Activated CD4-positive, alpha-beta T cell treated with anti-CD3 and anti-CD28 coated beads for 36 hours (primary cell): ENCODE measurements at regions of chr1 and their contacts with region 1.

Region 1: DNA sequence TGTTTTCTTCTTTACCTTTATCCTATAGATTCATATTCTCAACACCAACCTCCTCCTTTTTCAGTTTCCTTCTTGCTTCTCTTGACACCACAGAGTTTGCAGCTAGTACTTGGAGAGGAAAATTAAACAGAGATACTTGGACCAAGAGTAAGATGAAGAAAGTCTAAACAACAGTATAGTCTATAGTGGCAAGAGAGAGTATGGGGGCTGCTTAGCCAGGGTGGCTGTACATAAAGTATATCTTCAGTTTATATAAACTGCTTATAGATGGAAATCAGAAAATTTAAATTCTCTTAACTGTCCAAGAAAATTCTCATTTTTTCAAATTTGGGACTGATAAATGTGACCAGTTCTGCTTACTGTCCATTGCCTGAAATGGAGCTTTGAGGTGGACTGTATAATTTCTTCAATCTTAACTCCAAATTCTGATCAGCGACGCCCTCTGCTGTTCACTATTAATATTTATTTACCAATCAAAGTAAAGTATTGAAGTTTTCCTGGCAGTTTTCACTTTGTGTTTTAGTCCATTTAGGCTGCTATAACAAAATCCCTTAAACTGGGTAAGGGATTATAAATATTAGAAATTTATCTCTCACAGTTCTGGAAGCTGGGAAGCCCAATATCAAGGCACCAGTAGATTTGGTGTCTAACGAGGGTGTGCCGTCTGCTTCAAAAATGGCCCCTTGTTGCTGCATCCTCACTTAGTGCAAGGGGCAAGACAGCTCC is 14.8 kb upstream of the METTL18 start:
- DNase-seq: peak; percentile 24
- ATAC-seq: no peak
- H3K4me3 Mint-ChIP-seq: no peak overlapping the region
- H3K27ac Mint-ChIP-seq: no peak overlapping the region
- H3K4me1 Mint-ChIP-seq: no peaks in the 10 kb centered on the region
- H3K27me3 Mint-ChIP-seq: no peaks in the 10 kb centered on the region

Region 2: DNA sequence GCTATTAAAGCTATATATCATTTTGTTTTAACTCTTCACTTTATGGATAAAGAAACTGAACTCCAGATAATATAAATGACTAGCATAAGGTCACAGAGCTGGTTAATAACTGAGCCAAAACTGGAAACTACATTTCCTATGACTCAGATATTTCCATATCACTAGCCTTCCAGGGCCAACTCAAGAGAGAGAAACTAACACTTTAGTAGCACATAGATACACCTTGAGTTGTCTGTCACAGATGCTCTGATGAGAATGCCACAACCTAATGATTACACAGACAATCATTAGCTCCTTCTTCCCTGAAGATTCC is 482.6 kb before region 1 on chr1:
- CTCF ChIA-PET with region 1: no interaction called
- POLR2A ChIA-PET with region 1: no interaction called
- intact Hi-C with region 1: no loop called
- DNase-seq: no peak
- ATAC-seq: peak; percentile 96
- H3K4me3 Mint-ChIP-seq: no peak overlapping the region
- H3K27ac Mint-ChIP-seq: no peak overlapping the region
- H3K4me1 Mint-ChIP-seq: peaks cover 19% of the 10 kb centered on the region
- H3K27me3 Mint-ChIP-seq: no peaks in the 10 kb centered on the region

Region 3: DNA sequence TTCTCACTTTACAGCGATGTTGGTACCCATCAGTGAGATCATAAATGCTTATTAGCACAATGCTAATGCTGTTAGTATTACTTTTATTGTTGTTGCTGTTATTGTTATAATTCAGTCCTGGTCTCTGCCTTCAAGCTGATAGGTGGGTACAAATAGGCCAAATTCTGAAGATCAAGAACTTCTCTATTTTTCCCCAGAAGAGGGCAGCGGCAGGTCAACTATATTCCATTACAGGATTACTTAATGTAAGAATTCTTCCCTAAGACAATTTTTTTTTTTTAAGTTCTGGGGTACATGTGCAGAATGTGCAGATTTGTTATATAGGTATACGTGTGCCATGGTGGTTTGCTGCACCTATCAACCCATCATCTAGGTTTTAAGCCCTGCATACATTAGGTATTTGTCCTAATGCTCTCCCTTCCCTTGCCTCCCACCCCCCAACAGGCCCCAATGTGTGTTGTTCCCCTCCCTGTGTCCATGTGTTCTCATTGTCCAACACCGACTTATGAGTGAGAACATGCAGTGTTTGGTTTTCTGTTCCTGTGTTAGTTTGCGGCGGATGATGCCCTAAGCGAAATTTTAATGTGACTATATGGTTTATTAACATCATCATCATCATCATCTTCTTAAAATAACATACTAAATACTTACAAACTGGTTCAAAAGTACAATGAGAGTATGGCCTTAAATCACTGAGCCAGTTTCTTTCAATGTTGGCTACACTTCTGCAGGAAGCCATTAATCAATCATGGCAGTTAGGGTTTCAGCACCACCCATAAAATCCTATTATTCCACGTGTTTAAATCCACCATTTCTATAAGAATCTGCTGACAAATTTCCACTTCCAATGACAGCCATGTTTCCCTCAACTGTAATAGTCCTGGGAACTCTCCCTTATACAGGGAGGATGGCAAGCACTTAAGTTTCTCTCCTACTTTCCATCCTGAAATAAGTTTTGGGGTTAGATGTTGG is 343.0 kb before region 1 on chr1:
- CTCF ChIA-PET with region 1: no interaction called
- POLR2A ChIA-PET with region 1: no interaction called
- intact Hi-C with region 1: loop called in 1 of 2 experiments (anchors 2 kb)
- DNase-seq: peak; percentile 46
- ATAC-seq: no peak
- H3K4me3 Mint-ChIP-seq: no peak overlapping the region
- H3K27ac Mint-ChIP-seq: no peak overlapping the region
- H3K4me1 Mint-ChIP-seq: peaks cover 4% of the 10 kb centered on the region
- H3K27me3 Mint-ChIP-seq: no peaks in the 10 kb centered on the region

Region 4: GRCh38 chr1:169546087-169546995 is 263.2 kb before region 1 on chr1:
- CTCF ChIA-PET with region 1: interaction called, 3 read pairs
- POLR2A ChIA-PET with region 1: no interaction called
- intact Hi-C with region 1: loop called (anchors 2 kb)
- DNase-seq: peak; percentile 57
- ATAC-seq: peak; percentile 81
- H3K4me3 Mint-ChIP-seq: no peak overlapping the region
- H3K27ac Mint-ChIP-seq: peak overlapping the region; percentile 2
- H3K4me1 Mint-ChIP-seq: no peaks in the 10 kb centered on the region
- H3K27me3 Mint-ChIP-seq: no peaks in the 10 kb centered on the region

Region 5: DNA sequence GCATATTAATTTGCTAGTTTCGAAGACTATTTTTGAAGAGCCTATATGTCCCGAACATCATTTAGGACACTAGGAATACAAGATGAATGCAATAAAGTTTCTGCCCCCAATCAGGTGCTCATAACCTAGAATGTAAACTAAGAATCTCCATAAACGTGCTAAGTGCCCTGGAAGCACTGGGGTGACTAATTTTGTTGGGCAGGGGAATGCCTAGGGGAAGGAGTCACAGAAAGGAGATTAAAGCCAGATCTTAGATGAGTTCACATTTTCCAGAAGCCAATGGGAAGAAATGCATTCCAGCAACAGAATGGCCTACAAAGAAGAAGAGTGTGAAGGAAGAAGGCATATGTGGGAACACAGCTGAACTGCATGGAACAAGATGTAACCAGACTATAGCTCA is 64.7 kb after region 1 on chr1:
- CTCF ChIA-PET with region 1: no interaction called
- POLR2A ChIA-PET with region 1: no interaction called
- intact Hi-C with region 1: loop called in 1 of 2 experiments (anchors 10 kb)
- DNase-seq: no peak
- ATAC-seq: no peak
- H3K4me3 Mint-ChIP-seq: no peak overlapping the region
- H3K27ac Mint-ChIP-seq: no peak overlapping the region
- H3K4me1 Mint-ChIP-seq: peaks cover 16% of the 10 kb centered on the region
- H3K27me3 Mint-ChIP-seq: no peaks in the 10 kb centered on the region